Aorta (tissue), 5 donors: ENCODE measurements at regions of chr19 and their contacts with region 1.

Region 1: GRCh38 chr19:38250821-38251563 is 5.2 kb downstream of the PPP1R14A start:
- DNase-seq: peak; percentile 88 to 93
- ATAC-seq: peak; percentile 66
- H3K4me3 ChIP-seq: peak overlapping the region; percentile 16 to 41
- H3K27ac ChIP-seq: peak overlapping the region; percentile 96 to 99
- H3K4me1 ChIP-seq: peaks cover 3% of the 10 kb centered on the region in 2 donors
- H3K27me3 ChIP-seq: no peaks in the 10 kb centered on the region

Region 2: GRCh38 chr19:38374429-38375176 is 123.6 kb after region 1 on chr19 and contains the start of gene PSMD8:
- intact Hi-C with region 1: no loop called
- DNase-seq: peak; percentile 99
- ATAC-seq: peak; percentile 99
- H3K4me3 ChIP-seq: peak within 1 kb of the TSS; percentile 47 to 68
- H3K27ac ChIP-seq: peak within 1 kb of the TSS in 1 of 2 donors; percentile 78
- H3K4me1 ChIP-seq: peaks cover 0 to 8% of the 10 kb centered on the region in 2 donors
- H3K27me3 ChIP-seq: no peaks in the 10 kb centered on the region
- total RNA-seq, gene PSMD8: 92.4 to 119 TPM

Region 3: DNA sequence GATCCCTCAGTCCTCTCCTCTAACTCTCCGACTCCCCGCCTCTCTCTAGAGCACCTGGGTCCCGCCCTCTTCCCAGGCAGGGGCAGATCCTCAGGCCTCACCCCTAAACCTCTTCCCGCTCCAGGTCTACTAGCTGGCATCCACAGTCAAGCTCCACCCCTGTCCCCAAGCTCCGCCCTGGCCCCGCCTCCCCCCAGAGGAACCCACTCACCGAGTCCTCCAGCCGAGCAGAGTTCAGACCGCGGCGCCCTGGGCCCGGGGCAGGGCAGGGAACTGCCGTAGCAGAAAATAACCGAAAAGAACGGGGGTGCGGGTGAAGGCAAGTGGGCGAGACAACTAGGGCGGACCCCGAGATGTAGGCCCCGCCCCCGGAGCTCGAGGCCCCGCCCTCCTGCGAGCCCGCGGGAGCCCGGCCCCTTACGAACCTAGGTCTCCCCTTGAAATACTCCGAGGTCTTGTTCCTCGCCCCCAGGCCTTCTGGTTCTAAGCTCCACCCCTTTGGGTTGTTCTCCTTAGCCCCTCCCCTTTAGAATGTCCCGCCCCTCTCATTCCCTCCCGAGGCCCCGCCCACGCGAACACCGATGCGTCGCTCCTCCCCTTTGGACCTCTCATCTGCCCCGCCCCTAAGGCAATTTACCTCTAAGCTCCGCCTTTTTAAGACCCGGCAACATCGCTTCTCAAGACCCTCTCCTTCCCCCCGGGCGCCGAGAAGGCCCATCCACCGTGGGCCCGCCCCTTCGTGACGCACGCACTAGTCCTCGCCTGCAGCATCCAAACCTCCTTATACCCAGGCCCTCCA is 136.8 kb after region 1 on chr19 and contains the start of gene GGN:
- intact Hi-C with region 1: loop called in 1 of 2 experiments (anchors 5 kb)
- DNase-seq: peak; percentile 93 to 95
- ATAC-seq: peak; percentile 86
- H3K4me3 ChIP-seq: peak within 1 kb of the TSS; percentile 45 to 56
- H3K27ac ChIP-seq: peak within 1 kb of the TSS; percentile 20 to 73
- H3K4me1 ChIP-seq: no peaks in the 10 kb centered on the region
- H3K27me3 ChIP-seq: no peaks in the 10 kb centered on the region
- total RNA-seq, gene GGN: 3.3 to 4.7 TPM

Region 4: DNA sequence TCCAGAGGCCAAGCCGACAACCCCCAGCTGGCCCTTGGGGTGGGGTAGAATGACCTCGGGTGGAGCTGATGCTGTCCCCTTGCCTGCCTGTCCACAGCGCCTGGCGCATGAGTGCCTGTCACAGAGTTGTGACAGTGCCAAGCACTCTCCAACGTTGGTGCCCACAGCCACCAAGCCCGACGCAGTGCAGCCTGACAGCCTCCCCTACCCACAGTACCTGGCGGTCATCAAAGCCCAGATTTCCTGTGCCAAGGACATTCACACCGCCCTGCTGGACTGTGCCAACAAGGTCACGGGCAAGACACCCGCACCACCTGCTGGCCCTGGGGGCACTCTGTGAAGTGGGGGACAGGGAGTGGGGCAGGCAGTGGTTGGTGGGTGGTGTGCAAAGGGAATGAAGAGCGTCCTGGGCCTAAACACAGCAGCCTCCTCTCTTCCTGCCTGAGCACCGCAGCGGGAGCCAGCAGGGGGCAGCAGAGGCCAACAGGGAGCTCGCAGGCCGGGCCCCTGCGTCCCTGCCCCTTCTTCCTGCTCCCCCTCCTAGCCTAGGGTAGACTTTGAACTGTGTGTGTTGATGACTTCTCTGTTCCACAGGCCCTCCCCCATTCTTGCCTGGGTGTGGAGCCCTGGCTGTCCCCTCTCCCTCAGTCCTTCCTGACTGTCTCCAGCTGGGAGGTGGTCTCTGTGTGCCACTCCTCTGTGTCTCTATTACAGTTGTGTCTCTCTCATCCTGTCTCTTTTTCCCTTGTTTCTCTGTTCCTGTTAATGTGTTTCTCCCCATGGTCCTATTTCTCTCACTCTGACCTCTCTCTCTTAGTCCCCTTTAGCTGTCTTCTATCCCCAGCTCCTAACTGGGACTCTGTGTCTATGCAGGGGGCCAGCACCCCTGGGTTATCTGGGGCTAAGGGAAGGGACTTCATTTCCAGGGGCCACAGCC is 1146.6 kb after region 1 on chr19:
- intact Hi-C with region 1: loop called (anchors 10 kb)
- DNase-seq: peak; percentile 94 to 97
- ATAC-seq: peak; percentile 88
- H3K4me3 ChIP-seq: no peak overlapping the region
- H3K27ac ChIP-seq: peak overlapping the region in 1 of 2 donors; percentile 86
- H3K4me1 ChIP-seq: no peaks in the 10 kb centered on the region
- H3K27me3 ChIP-seq: no peaks in the 10 kb centered on the region